ENCODE measurements at regions of chr14 and their contacts with region 1.

Region 1: DNA sequence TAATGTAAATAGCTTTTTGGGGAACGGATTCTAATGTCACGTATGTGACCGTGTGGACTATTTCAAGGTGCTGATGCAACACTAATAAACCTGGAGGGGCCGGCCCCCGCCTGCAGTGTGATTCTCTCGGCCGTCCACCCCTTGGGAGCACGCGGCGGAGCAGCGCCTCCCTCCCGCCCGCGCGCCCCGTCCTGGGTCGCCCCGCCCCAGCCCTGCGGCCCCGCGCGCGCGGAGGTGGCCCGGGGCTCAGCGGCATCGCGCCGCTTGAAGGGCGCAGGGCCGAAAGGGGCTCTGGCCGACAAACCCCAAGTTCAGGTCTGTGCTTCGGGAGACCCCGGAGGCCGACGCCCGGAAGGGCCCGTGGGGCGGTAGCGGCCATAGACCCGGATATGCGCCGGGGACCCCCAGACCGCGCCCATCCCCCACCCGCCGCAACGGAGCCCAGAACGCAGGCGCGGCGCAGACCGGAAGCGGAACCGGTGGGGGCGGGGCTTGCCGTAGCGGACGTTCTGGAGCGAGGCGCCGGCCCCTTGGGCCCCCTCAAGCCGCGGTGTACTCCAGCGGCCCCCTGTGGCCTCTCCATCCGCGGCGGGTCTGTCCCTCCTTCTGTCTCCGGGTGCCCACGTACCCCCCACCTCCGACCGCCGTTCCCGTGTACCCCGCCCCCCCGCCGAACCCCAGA is at the start of gene TEX22:
- DNase-seq: peak; percentile 94
- ATAC-seq: peak; percentile 86
- H3K4me3 Mint-ChIP-seq: peak within 1 kb of the TSS; percentile 85
- H3K27ac Mint-ChIP-seq: peak within 1 kb of the TSS; percentile 91
- H3K4me1 Mint-ChIP-seq: peaks cover 11% of the 10 kb centered on the region
- H3K27me3 Mint-ChIP-seq: no peaks in the 10 kb centered on the region
- total RNA-seq, gene TEX22: 1.4 to 2.4 TPM

Region 2: DNA sequence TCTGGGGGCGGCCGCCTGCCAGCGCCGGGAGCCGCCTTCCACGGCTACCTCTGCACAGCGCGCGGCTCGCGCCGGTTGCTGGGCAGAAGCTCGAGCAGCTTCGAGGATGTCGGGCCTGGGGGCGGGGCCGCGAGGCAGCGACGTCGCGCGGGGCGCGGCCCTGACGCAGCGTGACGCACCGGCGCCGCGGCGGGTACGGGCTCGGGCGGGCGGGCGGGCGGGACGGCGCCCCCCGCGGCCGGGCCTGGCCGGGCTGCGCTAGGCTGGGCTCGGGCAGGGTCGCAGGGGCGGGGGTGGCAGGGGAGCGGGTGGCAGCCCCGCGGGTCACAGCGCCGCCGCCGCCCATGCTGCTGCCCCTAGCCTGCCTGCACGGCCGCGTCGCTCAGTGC is 149.8 kb before region 1 on chr14 and contains the start of gene BTBD6:
- CTCF ChIA-PET with region 1: no interaction called
- POLR2A ChIA-PET with region 1: no interaction called
- intact Hi-C with region 1: loop called in 1 of 2 experiments (anchors 1 kb)
- DNase-seq: peak; percentile 93
- ATAC-seq: peak; percentile 97
- H3K4me3 Mint-ChIP-seq: peak within 1 kb of the TSS; percentile 74
- H3K27ac Mint-ChIP-seq: peak within 1 kb of the TSS; percentile 51
- H3K4me1 Mint-ChIP-seq: peaks cover 15% of the 10 kb centered on the region
- H3K27me3 Mint-ChIP-seq: no peaks in the 10 kb centered on the region
- total RNA-seq, gene BTBD6: 18.9 to 23.2 TPM

Region 3: GRCh38 chr14:105294142-105294597 is 104.0 kb before region 1 on chr14:
- CTCF ChIA-PET with region 1: no interaction called
- POLR2A ChIA-PET with region 1: no interaction called
- intact Hi-C with region 1: loop called in 1 of 2 experiments (anchors 5 kb)
- DNase-seq: peak; percentile 92
- ATAC-seq: peak; percentile 95
- H3K4me3 Mint-ChIP-seq: peak overlapping the region; percentile 56
- H3K27ac Mint-ChIP-seq: peak overlapping the region; percentile 90
- H3K4me1 Mint-ChIP-seq: peaks cover 54% of the 10 kb centered on the region
- H3K27me3 Mint-ChIP-seq: no peaks in the 10 kb centered on the region

Region 4: DNA sequence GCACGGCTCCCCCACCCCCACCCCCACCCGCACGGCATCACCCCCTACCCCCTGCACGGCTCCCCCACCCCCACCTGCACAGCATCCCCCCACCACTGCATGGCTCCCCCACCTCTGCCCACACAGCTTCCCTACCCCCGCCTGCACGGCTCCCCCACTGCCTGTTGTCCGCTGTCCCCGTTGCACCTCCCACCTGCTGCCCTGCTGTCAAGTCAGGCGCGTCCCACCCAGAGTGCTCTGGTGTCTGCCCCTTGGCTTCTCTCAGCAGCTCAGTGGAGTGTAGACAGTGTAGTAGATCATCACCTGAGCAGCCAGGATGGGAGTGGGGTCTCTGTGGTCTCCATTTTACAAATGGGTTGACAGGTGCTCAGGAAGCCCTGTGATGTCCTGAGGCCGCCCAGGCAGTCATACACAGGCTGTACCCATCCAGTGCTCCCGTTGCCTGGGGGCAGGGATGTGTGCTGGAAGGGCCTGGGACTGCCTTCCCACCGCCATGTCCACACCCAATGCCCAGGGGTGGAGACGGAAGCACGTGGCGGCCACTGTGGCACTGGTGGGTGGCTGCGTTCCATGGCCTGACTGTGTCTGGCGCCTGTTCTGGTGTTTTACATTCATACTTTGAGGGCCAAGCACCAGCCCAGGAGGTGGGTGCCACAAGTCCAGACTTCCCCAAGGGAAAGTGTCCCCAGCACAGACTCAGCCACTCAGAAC is 51.2 kb before region 1 on chr14:
- CTCF ChIA-PET with region 1: no interaction called
- POLR2A ChIA-PET with region 1: no interaction called
- intact Hi-C with region 1: no loop called
- DNase-seq: no peak
- ATAC-seq: no peak
- H3K4me3 Mint-ChIP-seq: no peak overlapping the region
- H3K27ac Mint-ChIP-seq: no peak overlapping the region
- H3K4me1 Mint-ChIP-seq: peaks cover under 1% of the 10 kb centered on the region
- H3K27me3 Mint-ChIP-seq: no peaks in the 10 kb centered on the region

Region 5: GRCh38 chr14:105375635-105376057 is 22.5 kb before region 1 on chr14:
- CTCF ChIA-PET with region 1: interaction called, 11 read pairs
- POLR2A ChIA-PET with region 1: no interaction called
- intact Hi-C with region 1: no loop called
- DNase-seq: peak; percentile 83
- ATAC-seq: peak; percentile 77
- H3K4me3 Mint-ChIP-seq: no peak overlapping the region
- H3K27ac Mint-ChIP-seq: peak overlapping the region; percentile 78
- H3K4me1 Mint-ChIP-seq: peaks cover 12% of the 10 kb centered on the region
- H3K27me3 Mint-ChIP-seq: no peaks in the 10 kb centered on the region

Region 6: GRCh38 chr14:105414456-105415371 is 16.5 kb after region 1 on chr14:
- CTCF ChIA-PET with region 1: interaction called, 14 read pairs
- POLR2A ChIA-PET with region 1: interaction called, 3 read pairs
- intact Hi-C with region 1: loop called in 1 of 2 experiments (anchors 1 kb)
- DNase-seq: peak; percentile 81
- ATAC-seq: peak; percentile 85
- H3K4me3 Mint-ChIP-seq: peak overlapping the region; percentile 61
- H3K27ac Mint-ChIP-seq: no peak overlapping the region
- H3K4me1 Mint-ChIP-seq: peaks cover 11% of the 10 kb centered on the region
- H3K27me3 Mint-ChIP-seq: peaks cover 17% of the 10 kb centered on the region

Region 7: GRCh38 chr14:105473677-105474482 is 75.7 kb after region 1 on chr14:
- CTCF ChIA-PET with region 1: no interaction called
- POLR2A ChIA-PET with region 1: no interaction called
- intact Hi-C with region 1: loop called in 1 of 2 experiments (anchors 1 kb)
- DNase-seq: peak; percentile 81
- ATAC-seq: peak; percentile 63
- H3K4me3 Mint-ChIP-seq: peak overlapping the region; percentile 33
- H3K27ac Mint-ChIP-seq: no peak overlapping the region
- H3K4me1 Mint-ChIP-seq: peaks cover 5% of the 10 kb centered on the region
- H3K27me3 Mint-ChIP-seq: no peaks in the 10 kb centered on the region

Region 8: DNA sequence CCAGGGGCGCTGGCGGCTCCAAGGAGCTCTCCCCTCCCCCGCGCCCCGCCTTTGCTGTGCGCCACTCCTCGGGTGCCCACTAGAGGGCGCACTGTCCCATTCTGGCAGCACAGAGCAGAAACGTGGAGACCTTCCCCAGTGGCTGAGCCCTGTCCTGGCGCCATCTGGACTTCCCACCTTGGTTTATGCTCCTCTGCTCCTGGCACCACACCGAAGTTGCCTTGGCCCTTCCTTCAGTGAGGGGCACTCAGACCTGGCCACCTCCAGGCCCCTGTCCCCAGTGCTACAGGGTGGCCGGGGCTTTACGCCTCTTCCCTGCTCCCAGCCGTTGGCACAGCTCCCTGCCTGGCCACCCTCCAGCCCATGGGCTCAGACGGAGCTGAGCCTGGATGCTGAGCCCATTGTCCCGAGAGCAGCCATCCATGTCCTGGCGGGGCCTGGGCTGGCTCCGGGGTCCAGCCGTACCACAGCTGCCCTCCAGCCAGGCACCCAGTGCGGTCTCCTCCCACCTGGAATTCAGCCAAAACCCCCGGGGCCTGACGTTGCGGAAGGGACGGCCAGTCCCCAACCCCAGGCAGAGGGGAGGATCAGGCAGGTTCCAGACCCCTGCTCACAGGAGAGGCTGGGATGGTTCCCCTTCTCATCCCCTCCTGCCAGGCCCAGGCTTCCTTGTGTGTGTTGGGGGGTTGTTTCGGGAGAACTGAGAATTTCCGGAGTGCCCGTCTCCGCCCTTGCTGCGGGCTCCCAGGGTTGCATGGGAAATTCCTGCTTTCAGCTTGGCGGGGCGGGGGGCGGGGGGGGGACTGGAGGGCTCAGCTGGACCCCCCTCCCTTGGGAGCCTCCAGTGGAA is 83.0 kb after region 1 on chr14:
- CTCF ChIA-PET with region 1: interaction called, 5 read pairs
- POLR2A ChIA-PET with region 1: no interaction called
- intact Hi-C with region 1: loop called in 1 of 2 experiments (anchors 2 kb)
- DNase-seq: peak; percentile 95
- ATAC-seq: peak; percentile 69
- H3K4me3 Mint-ChIP-seq: peak overlapping the region; percentile 62
- H3K27ac Mint-ChIP-seq: peak overlapping the region; percentile 87
- H3K4me1 Mint-ChIP-seq: peaks cover 48% of the 10 kb centered on the region
- H3K27me3 Mint-ChIP-seq: peaks cover 5% of the 10 kb centered on the region

Region 9: DNA sequence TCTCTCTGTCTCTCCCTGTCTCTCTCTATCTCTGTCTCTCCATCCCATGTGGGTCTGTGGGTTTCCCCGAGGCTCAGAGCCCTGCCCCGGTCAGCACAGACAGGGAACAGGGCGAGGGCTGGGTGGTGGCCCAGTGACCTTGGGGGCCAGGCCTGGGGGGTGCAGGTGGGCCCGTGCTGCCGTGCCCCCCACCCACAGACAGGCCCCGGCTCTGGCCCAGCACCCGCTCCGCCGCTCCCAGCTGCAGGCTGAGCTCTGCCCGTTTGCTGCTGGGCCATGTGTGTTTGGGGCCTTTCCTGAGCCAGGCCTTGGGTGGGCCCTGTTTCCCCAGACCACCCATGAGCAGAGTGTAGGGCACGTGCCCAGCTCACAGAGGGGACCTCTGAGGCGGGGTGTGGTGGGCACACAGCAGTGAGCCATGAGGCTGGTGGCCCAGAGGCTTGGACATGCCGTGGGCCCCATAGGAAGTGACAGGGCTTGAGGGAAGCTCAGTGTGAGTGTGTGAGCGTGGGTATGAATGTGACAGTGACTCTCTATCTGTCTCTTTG is 179.2 kb after region 1 on chr14:
- CTCF ChIA-PET with region 1: no interaction called
- POLR2A ChIA-PET with region 1: no interaction called
- intact Hi-C with region 1: no loop called
- DNase-seq: peak; percentile 28
- ATAC-seq: peak; percentile 41
- H3K4me3 Mint-ChIP-seq: no peak overlapping the region
- H3K27ac Mint-ChIP-seq: no peak overlapping the region
- H3K4me1 Mint-ChIP-seq: peaks cover 2% of the 10 kb centered on the region
- H3K27me3 Mint-ChIP-seq: peaks cover 5% of the 10 kb centered on the region

Measured in activated CD4-positive, alpha-beta T cell treated with anti-CD3 and anti-CD28 coated beads for 36 hours (primary cell).